ENCODE measurements at regions of chr3 and their contacts with region 1.

Region 1: GRCh38 chr3:80785470-80785869 is 976.0 kb downstream of the GBE1 start:
- DNase-seq: peak; percentile 58
- ATAC-seq: peak; percentile 94
- H3K4me3 ChIP-seq: no peak overlapping the region
- H3K27ac ChIP-seq: no peak overlapping the region
- H3K4me1 ChIP-seq: peaks cover 9% of the 10 kb centered on the region; the same call in 1 of the 2 replicates
- H3K27me3 ChIP-seq: no peaks in the 10 kb centered on the region
- CTCF ChIP-seq: peak; percentile 87

Region 2: GRCh38 chr3:80914854-80915253 is 129.4 kb after region 1 on chr3:
- CTCF ChIA-PET with region 1: no interaction called
- POLR2A ChIA-PET with region 1: no interaction called
- intact Hi-C with region 1: loop called (anchors 5 kb)
- DNase-seq: peak; percentile 66
- ATAC-seq: peak; percentile 100
- H3K4me3 ChIP-seq: no peak overlapping the region
- H3K27ac ChIP-seq: no peak overlapping the region
- H3K4me1 ChIP-seq: peaks cover 8% of the 10 kb centered on the region
- H3K27me3 ChIP-seq: no peaks in the 10 kb centered on the region
- CTCF ChIP-seq: no peak

Region 3: GRCh38 chr3:80993241-80993945 is 207.9 kb after region 1 on chr3:
- CTCF ChIA-PET with region 1: no interaction called
- POLR2A ChIA-PET with region 1: no interaction called
- intact Hi-C with region 1: loop called (anchors 10 kb)
- DNase-seq: no peak
- ATAC-seq: no peak
- H3K4me3 ChIP-seq: no peak overlapping the region
- H3K27ac ChIP-seq: peak overlapping the region; percentile 59
- H3K4me1 ChIP-seq: peaks cover 21% of the 10 kb centered on the region
- H3K27me3 ChIP-seq: no peaks in the 10 kb centered on the region
- CTCF ChIP-seq: no peak

Region 4: DNA sequence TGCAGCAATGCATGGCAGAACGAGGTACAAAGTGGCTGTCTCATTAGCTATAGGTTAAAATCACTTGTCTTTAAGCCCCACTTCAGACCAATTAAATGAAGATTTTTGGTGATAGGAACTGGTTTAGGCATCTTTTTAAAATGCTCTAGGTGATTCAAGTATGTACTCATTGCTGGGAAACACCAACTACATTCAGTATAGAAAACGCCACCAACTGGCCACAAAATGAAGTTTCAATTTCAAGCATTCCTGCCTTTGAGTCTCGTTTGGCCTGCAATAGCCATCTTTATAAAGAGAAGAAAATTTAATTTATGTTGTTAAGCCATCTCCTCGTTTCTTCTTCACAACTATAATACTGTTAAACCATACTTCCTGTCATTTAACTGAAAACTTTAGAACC is 388.0 kb after region 1 on chr3:
- CTCF ChIA-PET with region 1: no interaction called
- POLR2A ChIA-PET with region 1: no interaction called
- intact Hi-C with region 1: loop called (anchors 1 kb)
- DNase-seq: peak; percentile 66
- ATAC-seq: peak; percentile 76
- H3K4me3 ChIP-seq: no peak overlapping the region
- H3K27ac ChIP-seq: no peak overlapping the region
- H3K4me1 ChIP-seq: no peaks in the 10 kb centered on the region
- H3K27me3 ChIP-seq: no peaks in the 10 kb centered on the region
- CTCF ChIP-seq: peak; percentile 78

Region 5: DNA sequence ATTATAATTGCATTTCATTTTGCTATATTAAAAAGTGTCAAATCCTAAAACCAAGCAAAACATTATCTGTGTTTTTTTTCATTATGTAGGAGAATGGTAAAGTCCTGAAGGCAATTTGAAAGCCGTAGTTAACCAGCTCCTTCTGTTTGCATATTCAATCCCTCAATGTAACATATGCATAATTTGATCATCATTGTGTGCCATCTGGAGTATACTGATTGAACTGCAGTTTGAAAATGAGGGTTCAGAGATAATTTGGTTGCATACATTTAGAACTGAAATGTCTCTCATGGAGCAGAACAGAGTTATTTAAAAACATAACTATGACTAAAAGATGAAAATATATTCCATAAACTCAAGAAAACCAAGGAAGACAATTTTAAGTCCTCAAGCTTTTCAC is 457.4 kb after region 1 on chr3:
- CTCF ChIA-PET with region 1: no interaction called
- POLR2A ChIA-PET with region 1: no interaction called
- intact Hi-C with region 1: loop called (anchors 2 kb)
- DNase-seq: peak; percentile 70
- ATAC-seq: peak; percentile 65
- H3K4me3 ChIP-seq: no peak overlapping the region
- H3K27ac ChIP-seq: no peak overlapping the region
- H3K4me1 ChIP-seq: no peaks in the 10 kb centered on the region
- H3K27me3 ChIP-seq: no peaks in the 10 kb centered on the region
- CTCF ChIP-seq: peak; percentile 82

Region 6: DNA sequence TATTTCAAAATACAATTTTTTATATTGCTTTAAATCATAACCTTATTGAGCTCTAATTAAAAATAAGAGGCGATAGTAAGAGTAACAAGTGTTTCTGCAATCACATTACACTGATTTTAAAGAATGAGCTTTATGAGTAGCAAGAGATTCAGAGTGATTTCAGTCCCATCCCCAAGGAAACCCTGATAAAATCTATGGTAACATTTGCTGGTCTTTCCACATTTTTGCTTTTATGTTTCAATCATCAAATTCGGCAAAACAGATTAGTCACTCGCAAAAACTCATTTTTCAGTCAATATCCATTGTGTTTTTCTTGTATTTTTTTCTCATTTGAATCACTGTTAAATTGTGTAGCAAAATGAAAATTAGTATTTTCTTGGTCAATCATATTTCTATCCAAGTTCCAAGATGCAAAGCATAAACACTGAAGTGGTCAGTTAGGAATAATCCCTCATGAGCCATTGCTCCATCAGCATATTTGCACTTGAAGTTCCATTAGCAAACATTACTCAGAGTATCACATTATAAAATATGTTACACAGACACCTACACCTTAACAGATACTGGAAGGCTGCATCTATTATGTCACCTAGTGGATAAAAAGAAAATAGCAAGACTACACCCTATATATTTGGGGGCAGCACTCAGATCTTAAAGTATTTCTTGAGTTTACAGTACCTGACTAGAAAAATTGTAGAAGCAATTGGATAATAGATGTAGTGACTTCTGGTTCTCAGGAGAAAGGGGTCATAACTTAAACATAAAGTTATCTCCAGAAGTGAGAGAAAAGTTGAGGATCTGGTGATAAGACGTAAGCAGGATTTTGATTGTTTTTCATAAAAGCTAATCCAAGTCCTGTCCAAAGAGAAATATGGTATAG is 553.4 kb after region 1 on chr3:
- CTCF ChIA-PET with region 1: no interaction called
- POLR2A ChIA-PET with region 1: no interaction called
- intact Hi-C with region 1: loop called (anchors 2 kb)
- DNase-seq: peak; percentile 88
- ATAC-seq: peak; percentile 85
- H3K4me3 ChIP-seq: peak overlapping the region; percentile 8; the same call in 1 of the 2 replicates
- H3K27ac ChIP-seq: peak overlapping the region; percentile 3
- H3K4me1 ChIP-seq: peaks cover 24% of the 10 kb centered on the region
- H3K27me3 ChIP-seq: no peaks in the 10 kb centered on the region
- CTCF ChIP-seq: peak; percentile 92